SK-N-SH (cell line): ENCODE measurements at regions of chr15 and their contacts with region 1.

Region 1: GRCh38 chr15:38563723-38564519 is 693 bp downstream of the RASGRP1 start:
- DNase-seq: peak; percentile 85
- H3K4me3 ChIP-seq: peak overlapping the region; percentile 56 to 63
- H3K27ac ChIP-seq: no peak overlapping the region
- H3K4me1 ChIP-seq: peaks cover 0 to 16% of the 10 kb centered on the region in 2 experiments; a peak in 1 of 4 replicates
- H3K27me3 ChIP-seq: peaks cover 6% of the 10 kb centered on the region; the same call in 1 of the 2 replicates
- CTCF ChIP-seq: peak; percentile 87
- EP300 ChIP-seq: no peak
- RAD21 ChIP-seq: peak; percentile 51

Region 2: GRCh38 chr15:38474155-38474757 is 89.7 kb before region 1 on chr15:
- CTCF ChIA-PET with region 1: interaction called, 45 read pairs
- POLR2A ChIA-PET with region 1: no interaction called
- DNase-seq: peak; percentile 62
- H3K4me3 ChIP-seq: no peak overlapping the region
- H3K27ac ChIP-seq: no peak overlapping the region
- H3K4me1 ChIP-seq: no peaks in the 10 kb centered on the region; a peak in 2 of 4 replicates
- H3K27me3 ChIP-seq: no peaks in the 10 kb centered on the region
- CTCF ChIP-seq: peak; percentile 81
- EP300 ChIP-seq: no peak
- RAD21 ChIP-seq: peak; percentile 97

Region 3: DNA sequence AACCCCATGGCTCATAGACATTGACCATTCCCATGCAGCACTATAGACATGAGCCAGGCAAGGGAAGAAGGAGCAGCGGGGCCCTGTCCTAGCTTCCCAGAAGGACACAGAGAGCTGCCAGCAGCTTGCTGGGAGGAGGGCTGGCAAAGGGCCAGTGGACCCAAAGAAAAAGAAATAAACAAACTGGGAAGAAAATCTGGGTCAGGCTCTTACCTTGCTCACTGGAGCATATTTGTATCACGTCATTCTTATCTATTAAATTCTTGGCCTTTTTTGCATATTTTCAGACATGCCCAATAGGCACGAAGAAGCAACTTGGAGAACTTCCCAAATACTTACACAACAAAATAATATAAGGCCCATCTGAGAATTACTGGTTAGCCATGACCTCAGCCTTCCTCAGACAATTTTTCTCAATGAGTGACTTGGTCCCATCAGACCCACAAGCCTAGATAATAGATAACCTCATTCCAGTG is 27.7 kb before region 1 on chr15:
- CTCF ChIA-PET with region 1: interaction called, 16 read pairs
- POLR2A ChIA-PET with region 1: no interaction called
- DNase-seq: no peak
- H3K4me3 ChIP-seq: no peak overlapping the region
- H3K27ac ChIP-seq: peak overlapping the region in 1 of 2 experiments; percentile 71; a peak in 2 of 4 replicates
- H3K4me1 ChIP-seq: 0 out of 4 replicates have a peak, but pooled peaks cover 0 to 4% of the 10 kb centered on the region in 2 experiments
- H3K27me3 ChIP-seq: no peaks in the 10 kb centered on the region
- CTCF ChIP-seq: no peak
- EP300 ChIP-seq: no peak
- RAD21 ChIP-seq: no peak

Region 4: DNA sequence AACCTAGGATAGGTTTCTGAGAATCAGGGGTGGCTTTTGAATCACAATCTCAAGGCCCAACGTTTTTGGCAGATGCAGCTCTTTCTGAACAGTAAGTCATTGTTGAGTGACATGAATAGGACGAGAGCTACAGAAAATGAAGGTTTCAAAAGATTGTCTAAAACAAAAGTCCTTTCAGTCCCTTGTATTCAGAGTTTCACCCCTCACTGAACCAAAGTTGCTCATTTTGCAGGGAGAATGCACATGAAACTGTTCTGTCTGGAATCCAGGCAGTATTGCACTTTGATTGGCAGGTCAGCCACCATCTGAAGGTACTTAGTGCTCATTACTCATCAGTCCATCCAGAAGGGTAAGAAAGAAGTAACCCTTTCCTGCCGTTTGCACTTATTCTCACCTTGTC is 24.8 kb after region 1 on chr15:
- CTCF ChIA-PET with region 1: interaction called, 21 read pairs
- POLR2A ChIA-PET with region 1: no interaction called
- DNase-seq: no peak
- H3K4me3 ChIP-seq: no peak overlapping the region
- H3K27ac ChIP-seq: no peak overlapping the region
- H3K4me1 ChIP-seq: peaks cover 0 to 4% of the 10 kb centered on the region in 2 experiments; a peak in 2 of 4 replicates
- H3K27me3 ChIP-seq: no peaks in the 10 kb centered on the region; the same call in 1 of the 2 replicates
- CTCF ChIP-seq: no peak
- EP300 ChIP-seq: no peak
- RAD21 ChIP-seq: no peak

Region 5: DNA sequence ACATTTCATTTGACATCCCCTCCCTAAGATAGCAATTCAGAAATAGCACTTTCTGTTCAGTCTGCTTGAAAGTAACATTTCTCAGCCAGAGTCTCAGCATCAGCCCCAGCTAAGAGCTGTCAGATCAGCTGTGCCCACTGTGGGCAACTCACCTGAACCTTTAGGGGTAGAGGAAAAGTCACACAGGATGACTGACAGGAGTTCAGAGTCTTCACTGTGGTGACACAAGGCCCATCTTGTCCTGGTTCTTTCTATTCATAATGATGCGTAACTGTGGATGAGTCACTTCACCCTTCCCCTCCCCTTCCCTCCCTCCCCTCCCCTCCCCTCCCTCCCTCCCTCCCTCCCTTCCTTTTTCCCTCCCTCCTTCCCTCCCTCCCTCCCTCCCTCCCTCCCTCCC is 96.8 kb after region 1 on chr15:
- CTCF ChIA-PET with region 1: interaction called, 11 read pairs
- POLR2A ChIA-PET with region 1: no interaction called
- DNase-seq: no peak
- H3K4me3 ChIP-seq: no peak overlapping the region
- H3K27ac ChIP-seq: no peak overlapping the region
- H3K4me1 ChIP-seq: no peaks in the 10 kb centered on the region
- H3K27me3 ChIP-seq: peaks cover 1% of the 10 kb centered on the region
- CTCF ChIP-seq: no peak
- EP300 ChIP-seq: no peak
- RAD21 ChIP-seq: no peak

Region 6: GRCh38 chr15:38699633-38700230 is 135.8 kb after region 1 on chr15:
- CTCF ChIA-PET with region 1: interaction called, 110 read pairs
- POLR2A ChIA-PET with region 1: no interaction called
- DNase-seq: peak; percentile 39
- H3K4me3 ChIP-seq: peak overlapping the region in 1 of 2 experiments; percentile 5; a peak in 1 of 4 replicates
- H3K27ac ChIP-seq: no peak overlapping the region
- H3K4me1 ChIP-seq: peaks cover 0 to 38% of the 10 kb centered on the region in 2 experiments; a peak in 2 of 4 replicates
- H3K27me3 ChIP-seq: no peaks in the 10 kb centered on the region
- CTCF ChIP-seq: peak; percentile 91
- EP300 ChIP-seq: no peak
- RAD21 ChIP-seq: peak; percentile 66

Region 7: GRCh38 chr15:38745126-38745525 is 181.2 kb after region 1 on chr15:
- CTCF ChIA-PET with region 1: no interaction called
- POLR2A ChIA-PET with region 1: no interaction called
- DNase-seq: no peak
- H3K4me3 ChIP-seq: no peak overlapping the region
- H3K27ac ChIP-seq: no peak overlapping the region
- H3K4me1 ChIP-seq: peaks cover 0 to 13% of the 10 kb centered on the region in 2 experiments; a peak in 1 of 4 replicates
- H3K27me3 ChIP-seq: no peaks in the 10 kb centered on the region
- CTCF ChIP-seq: no peak
- EP300 ChIP-seq: no peak
- RAD21 ChIP-seq: no peak

Region 8: DNA sequence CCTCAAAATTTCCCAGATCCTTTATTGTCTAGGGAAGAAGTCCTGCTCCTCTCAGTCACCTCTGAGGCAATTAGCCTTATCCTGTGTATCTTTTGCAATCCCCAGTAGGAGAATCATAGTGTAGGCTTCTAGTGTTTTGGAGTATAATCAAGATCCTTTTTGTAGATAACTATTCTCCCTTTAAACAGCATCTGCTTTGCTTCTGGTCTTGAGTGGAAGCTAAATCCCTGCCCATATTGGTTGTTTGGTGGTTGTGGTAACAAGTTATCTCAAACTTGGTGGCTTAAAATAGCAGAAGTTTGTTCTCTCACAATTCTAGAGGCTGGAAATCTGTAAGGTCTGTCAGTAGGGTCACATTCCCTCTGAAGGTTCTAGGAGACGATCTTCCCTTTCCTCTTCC is 218.2 kb after region 1 on chr15:
- CTCF ChIA-PET with region 1: no interaction called
- POLR2A ChIA-PET with region 1: no interaction called
- DNase-seq: no peak
- H3K4me3 ChIP-seq: no peak overlapping the region
- H3K27ac ChIP-seq: no peak overlapping the region
- H3K4me1 ChIP-seq: no peaks in the 10 kb centered on the region
- H3K27me3 ChIP-seq: no peaks in the 10 kb centered on the region
- CTCF ChIP-seq: no peak
- EP300 ChIP-seq: no peak
- RAD21 ChIP-seq: no peak

Region 9: DNA sequence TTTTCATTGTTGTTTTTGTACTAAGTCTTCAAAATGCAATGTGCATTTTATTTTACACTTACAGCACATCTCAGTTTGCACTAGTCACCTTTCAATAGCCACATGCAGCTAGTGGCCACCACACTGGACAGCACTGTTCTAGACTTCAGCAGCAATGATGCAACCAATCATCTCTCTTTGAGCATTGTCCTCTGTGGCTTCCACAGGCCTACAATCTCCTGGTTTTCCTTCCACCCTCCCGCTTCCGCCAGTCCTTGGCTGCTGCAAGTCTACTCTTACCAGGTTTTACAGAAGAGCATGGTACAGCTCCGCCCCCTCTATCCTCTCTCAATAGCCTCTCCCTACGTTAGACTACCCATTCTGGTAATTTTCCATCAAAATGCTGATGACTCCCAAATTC is 1243.9 kb after region 1 on chr15:
- CTCF ChIA-PET with region 1: no interaction called
- POLR2A ChIA-PET with region 1: no interaction called
- DNase-seq: no peak
- H3K4me3 ChIP-seq: no peak overlapping the region
- H3K27ac ChIP-seq: no peak overlapping the region
- H3K4me1 ChIP-seq: no peaks in the 10 kb centered on the region
- H3K27me3 ChIP-seq: no peaks in the 10 kb centered on the region
- CTCF ChIP-seq: no peak
- EP300 ChIP-seq: no peak
- RAD21 ChIP-seq: no peak